ENCODE measurements at regions of chr16 and their contacts with region 1.

Region 1: DNA sequence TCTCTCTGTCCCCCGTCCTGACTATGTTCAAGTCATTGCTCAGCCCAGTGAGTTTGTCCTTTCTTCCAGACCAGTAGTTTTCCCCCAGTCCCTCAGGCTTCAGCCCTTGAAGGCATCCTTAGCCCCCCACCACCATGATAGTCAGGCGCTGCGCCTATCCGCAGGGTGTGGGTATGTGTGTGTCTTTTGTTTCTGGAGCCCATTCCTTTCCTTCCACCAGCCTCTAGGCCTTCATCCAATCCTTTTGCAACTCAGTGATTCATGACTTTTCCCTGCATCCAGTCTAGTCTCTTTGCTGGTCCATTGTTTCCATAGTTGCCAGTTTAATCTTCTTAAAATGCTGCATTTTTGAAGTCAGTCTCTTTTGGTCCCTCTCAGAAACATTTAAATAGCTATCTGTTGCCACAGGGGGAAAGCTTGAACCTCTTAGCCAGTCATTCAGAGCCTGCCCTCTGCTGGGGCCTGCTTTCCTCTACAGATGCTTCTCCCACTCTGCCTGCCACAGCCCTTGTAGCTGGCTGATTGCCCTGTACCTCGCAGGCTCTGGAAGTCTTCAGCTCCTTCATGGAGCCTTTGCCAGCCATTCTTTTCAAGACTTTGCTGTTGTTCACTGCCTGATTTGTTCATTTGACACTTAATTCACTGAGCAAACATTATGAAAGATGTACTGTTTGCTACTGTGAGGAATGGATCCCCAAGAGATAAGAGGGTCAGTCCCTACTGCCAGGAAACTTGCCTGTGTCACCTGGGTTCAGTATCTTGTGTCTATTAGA is 55.9 kb upstream of the ADCY7 start:
- DNase-seq: peak; percentile 43 to 77
- ATAC-seq: peak; percentile 83 to 90 (median 89)
- H3K4me3 ChIP-seq: no peak overlapping the region
- H3K4me3 Mint-ChIP-seq: no peak overlapping the region
- H3K27ac ChIP-seq: no peak overlapping the region
- H3K27ac Mint-ChIP-seq: peak overlapping the region; percentile 11 to 46
- H3K4me1 ChIP-seq: peaks cover 21% of the 10 kb centered on the region
- H3K4me1 Mint-ChIP-seq: peaks cover 32 to 35% of the 10 kb centered on the region in 2 donors
- H3K27me3 ChIP-seq: no peaks in the 10 kb centered on the region
- H3K27me3 Mint-ChIP-seq: no peaks in the 10 kb centered on the region
- CTCF ChIP-seq: peak; percentile 58

Region 2: GRCh38 chr16:50065624-50066481 is 144.6 kb before region 1 on chr16 and contains the start of gene HEATR3:
- intact Hi-C with region 1: loop called (anchors 1 kb)
- DNase-seq: peak; percentile 92 to 96
- ATAC-seq: peak; percentile 85 to 92 (median 87)
- H3K4me3 ChIP-seq: peak within 1 kb of the TSS; percentile 69
- H3K4me3 Mint-ChIP-seq: peak within 1 kb of the TSS; percentile 95
- H3K27ac ChIP-seq: peak within 1 kb of the TSS; percentile 69
- H3K27ac Mint-ChIP-seq: peak within 1 kb of the TSS; percentile 84
- H3K4me1 ChIP-seq: peaks cover 21% of the 10 kb centered on the region
- H3K4me1 Mint-ChIP-seq: peaks cover 24 to 38% of the 10 kb centered on the region in 2 donors
- H3K27me3 ChIP-seq: no peaks in the 10 kb centered on the region
- H3K27me3 Mint-ChIP-seq: no peaks in the 10 kb centered on the region
- CTCF ChIP-seq: no peak
- total RNA-seq, gene HEATR3: 14.6 to 25.0 (median 21.4) TPM

Region 3: GRCh38 chr16:50136399-50136798 is 74.1 kb before region 1 on chr16:
- intact Hi-C with region 1: loop called (anchors 1 kb)
- DNase-seq: no peak
- ATAC-seq: no peak
- H3K4me3 ChIP-seq: no peak overlapping the region
- H3K4me3 Mint-ChIP-seq: no peak overlapping the region
- H3K27ac ChIP-seq: no peak overlapping the region
- H3K27ac Mint-ChIP-seq: no peak overlapping the region
- H3K4me1 ChIP-seq: no peaks in the 10 kb centered on the region
- H3K4me1 Mint-ChIP-seq: no peaks in the 10 kb centered on the region
- H3K27me3 ChIP-seq: no peaks in the 10 kb centered on the region
- H3K27me3 Mint-ChIP-seq: no peaks in the 10 kb centered on the region
- CTCF ChIP-seq: no peak

Region 4: GRCh38 chr16:50195276-50195675 is 15.2 kb before region 1 on chr16:
- intact Hi-C with region 1: no loop called
- DNase-seq: no peak
- ATAC-seq: no peak
- H3K4me3 ChIP-seq: no peak overlapping the region
- H3K4me3 Mint-ChIP-seq: peak overlapping the region; percentile 51
- H3K27ac ChIP-seq: no peak overlapping the region
- H3K27ac Mint-ChIP-seq: peak overlapping the region; percentile 57 to 78
- H3K4me1 ChIP-seq: peaks cover 33% of the 10 kb centered on the region
- H3K4me1 Mint-ChIP-seq: peaks cover 65 to 77% of the 10 kb centered on the region in 2 donors
- H3K27me3 ChIP-seq: no peaks in the 10 kb centered on the region
- H3K27me3 Mint-ChIP-seq: no peaks in the 10 kb centered on the region
- CTCF ChIP-seq: no peak

Region 5: DNA sequence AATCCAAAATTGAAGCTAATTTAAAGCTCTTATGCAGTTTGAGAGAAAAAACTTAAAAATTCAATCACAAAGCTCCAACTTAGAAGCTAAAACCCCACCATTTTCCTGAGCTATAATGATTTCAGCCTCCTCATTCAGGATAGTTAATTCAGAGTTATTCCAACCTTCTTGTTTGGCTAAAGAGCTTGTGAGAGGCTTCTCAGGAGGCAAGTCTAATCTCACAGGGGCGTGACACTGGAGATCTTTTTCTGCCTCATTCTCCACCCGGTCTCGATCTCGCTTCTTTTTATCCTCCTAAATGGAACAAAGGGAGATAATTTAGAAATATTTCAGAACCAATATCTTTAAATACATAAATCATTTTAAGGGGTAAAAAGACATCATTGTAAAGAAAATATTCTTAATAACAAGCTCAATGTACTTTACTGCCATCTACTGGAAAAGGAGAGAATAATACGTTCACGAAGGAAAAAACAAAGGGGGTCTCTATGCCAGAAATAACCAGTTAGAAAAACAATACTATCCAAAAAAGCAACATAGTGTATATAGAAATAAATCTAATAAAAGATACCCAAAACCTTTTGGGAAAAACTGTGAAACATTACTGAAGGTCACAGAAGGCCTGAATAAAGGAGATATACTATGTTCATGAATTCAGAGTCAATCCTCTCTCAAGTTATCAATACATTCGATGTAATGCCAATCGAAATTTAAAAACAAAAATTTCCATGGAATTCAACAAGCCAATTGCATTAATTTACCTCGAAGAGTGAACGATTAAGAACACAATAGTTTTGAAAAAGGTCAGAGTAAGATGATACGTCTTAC is 144.4 kb after region 1 on chr16:
- intact Hi-C with region 1: loop called (anchors 1 kb)
- DNase-seq: peak in 1 of 2 donors; percentile 56
- ATAC-seq: peak in 2 of 3 donors; percentile 51 to 59
- H3K4me3 ChIP-seq: no peak overlapping the region
- H3K4me3 Mint-ChIP-seq: no peak overlapping the region
- H3K27ac ChIP-seq: peak overlapping the region; percentile 37
- H3K27ac Mint-ChIP-seq: peak overlapping the region; percentile 68 to 86
- H3K4me1 ChIP-seq: no peaks in the 10 kb centered on the region
- H3K4me1 Mint-ChIP-seq: peaks cover 16 to 17% of the 10 kb centered on the region in 2 donors
- H3K27me3 ChIP-seq: no peaks in the 10 kb centered on the region
- H3K27me3 Mint-ChIP-seq: no peaks in the 10 kb centered on the region
- CTCF ChIP-seq: peak; percentile 88

Region 6: GRCh38 chr16:50419116-50419515 is 208.7 kb after region 1 on chr16:
- intact Hi-C with region 1: no loop called
- DNase-seq: no peak
- ATAC-seq: no peak
- H3K4me3 ChIP-seq: no peak overlapping the region
- H3K4me3 Mint-ChIP-seq: no peak overlapping the region
- H3K27ac ChIP-seq: no peak overlapping the region
- H3K27ac Mint-ChIP-seq: no peak overlapping the region
- H3K4me1 ChIP-seq: no peaks in the 10 kb centered on the region
- H3K4me1 Mint-ChIP-seq: no peaks in the 10 kb centered on the region
- H3K27me3 ChIP-seq: peaks cover 3% of the 10 kb centered on the region
- H3K27me3 Mint-ChIP-seq: peaks cover 30 to 40% of the 10 kb centered on the region in 2 donors
- CTCF ChIP-seq: no peak

Region 7: GRCh38 chr16:50530277-50531236 is 320.1 kb after region 1 on chr16:
- intact Hi-C with region 1: no loop called
- DNase-seq: no peak
- ATAC-seq: no peak
- H3K4me3 ChIP-seq: no peak overlapping the region
- H3K4me3 Mint-ChIP-seq: no peak overlapping the region
- H3K27ac ChIP-seq: no peak overlapping the region
- H3K27ac Mint-ChIP-seq: no peak overlapping the region
- H3K4me1 ChIP-seq: no peaks in the 10 kb centered on the region
- H3K4me1 Mint-ChIP-seq: no peaks in the 10 kb centered on the region
- H3K27me3 ChIP-seq: no peaks in the 10 kb centered on the region
- H3K27me3 Mint-ChIP-seq: peaks cover 20 to 75% of the 10 kb centered on the region in 2 donors
- CTCF ChIP-seq: no peak

Region 8: DNA sequence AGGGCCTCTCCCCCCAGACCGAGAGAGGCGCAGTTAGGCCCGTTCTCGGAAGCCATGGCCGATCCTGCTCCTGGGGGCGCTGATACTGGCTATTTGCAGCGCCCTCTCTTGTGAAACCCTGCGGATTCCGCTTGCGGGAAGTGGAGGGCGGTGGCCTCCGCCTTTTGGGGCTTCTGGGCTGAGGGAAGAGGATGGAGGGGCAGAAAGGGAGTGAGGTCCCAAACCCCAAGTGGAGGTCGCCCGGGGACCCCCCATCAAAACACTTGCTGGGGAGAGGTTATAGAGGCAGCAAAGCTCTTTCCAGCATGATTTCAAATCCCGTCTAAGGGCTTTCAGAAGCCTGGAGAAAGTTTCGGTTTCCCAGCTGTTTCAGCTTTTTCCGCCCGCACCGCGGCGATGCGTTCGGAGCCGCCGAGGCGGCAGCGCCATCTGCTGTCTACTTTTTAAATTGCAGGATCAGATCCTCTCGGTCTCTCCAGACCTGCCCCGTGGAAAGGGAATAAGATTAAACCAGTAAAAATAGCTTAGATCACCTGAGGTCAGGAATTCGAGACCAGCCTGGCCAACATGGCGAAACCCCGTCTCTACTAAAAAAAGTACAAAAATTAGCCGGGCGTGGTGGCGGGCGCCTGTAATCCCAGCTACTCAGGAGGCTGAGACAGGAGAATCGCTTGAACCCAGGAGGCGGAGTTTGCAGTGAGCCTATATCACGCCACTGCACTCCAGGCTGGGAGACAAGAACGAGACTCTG is 454.9 kb after region 1 on chr16:
- intact Hi-C with region 1: loop called (anchors 5 kb)
- DNase-seq: peak; percentile 80 to 90
- ATAC-seq: peak; percentile 73 to 78 (median 74)
- H3K4me3 ChIP-seq: peak overlapping the region; percentile 56
- H3K4me3 Mint-ChIP-seq: peak overlapping the region; percentile 83
- H3K27ac ChIP-seq: peak overlapping the region; percentile 67
- H3K27ac Mint-ChIP-seq: peak overlapping the region; percentile 73 to 93
- H3K4me1 ChIP-seq: peaks cover 29% of the 10 kb centered on the region
- H3K4me1 Mint-ChIP-seq: peaks cover 23 to 30% of the 10 kb centered on the region in 2 donors
- H3K27me3 ChIP-seq: no peaks in the 10 kb centered on the region
- H3K27me3 Mint-ChIP-seq: no peaks in the 10 kb centered on the region
- CTCF ChIP-seq: peak; percentile 80